Activated CD4-positive, alpha-beta memory T cell treated with anti-CD3 and anti-CD28 coated beads, Interleukin-2, amount 10 ng/mL, durations not matched to agents 7 days and 5 days (primary cell): ENCODE measurements at regions of chr19 and their contacts with region 1.

Region 1: DNA sequence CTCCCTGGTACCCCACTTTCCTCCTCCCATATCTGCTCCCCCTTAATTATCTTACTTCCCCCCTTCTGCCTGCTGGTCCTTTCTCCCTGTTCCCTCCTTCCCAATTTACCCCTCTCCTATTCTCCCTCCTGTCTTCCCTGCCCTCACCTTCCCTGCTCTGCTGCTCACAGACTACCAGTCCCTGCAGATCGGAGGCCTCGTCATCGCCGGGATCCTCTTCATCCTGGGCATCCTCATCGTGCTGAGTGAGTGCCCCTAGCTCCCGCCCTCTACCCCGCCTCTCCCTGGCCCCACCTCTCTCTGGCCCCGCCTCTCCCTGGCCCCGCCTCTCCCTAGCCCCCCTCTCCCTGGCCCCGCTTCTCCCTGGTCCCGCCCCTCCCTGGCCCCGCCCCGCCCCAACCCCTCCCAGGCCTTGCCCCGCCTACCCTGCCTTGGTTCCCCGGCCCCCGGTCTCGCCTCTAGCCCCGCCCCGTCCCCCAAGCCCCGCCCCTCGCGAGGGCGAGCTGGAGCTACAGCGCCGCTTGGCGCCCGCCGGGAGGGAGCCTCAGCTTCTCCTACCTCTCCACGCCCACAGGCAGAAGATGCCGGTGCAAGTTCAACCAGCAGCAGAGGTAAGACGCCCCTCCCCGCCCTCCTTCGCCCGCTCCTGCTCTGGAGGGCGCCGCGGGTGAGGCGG is 2.0 kb upstream of the FXYD7 start:
- DNase-seq: peak; percentile 98
- H3K4me3 Mint-ChIP-seq: peak overlapping the region; percentile 76
- H3K27ac Mint-ChIP-seq: peak overlapping the region; percentile 52
- H3K4me1 Mint-ChIP-seq: peaks cover 35% of the 10 kb centered on the region
- H3K27me3 Mint-ChIP-seq: peaks cover 33% of the 10 kb centered on the region

Region 2: DNA sequence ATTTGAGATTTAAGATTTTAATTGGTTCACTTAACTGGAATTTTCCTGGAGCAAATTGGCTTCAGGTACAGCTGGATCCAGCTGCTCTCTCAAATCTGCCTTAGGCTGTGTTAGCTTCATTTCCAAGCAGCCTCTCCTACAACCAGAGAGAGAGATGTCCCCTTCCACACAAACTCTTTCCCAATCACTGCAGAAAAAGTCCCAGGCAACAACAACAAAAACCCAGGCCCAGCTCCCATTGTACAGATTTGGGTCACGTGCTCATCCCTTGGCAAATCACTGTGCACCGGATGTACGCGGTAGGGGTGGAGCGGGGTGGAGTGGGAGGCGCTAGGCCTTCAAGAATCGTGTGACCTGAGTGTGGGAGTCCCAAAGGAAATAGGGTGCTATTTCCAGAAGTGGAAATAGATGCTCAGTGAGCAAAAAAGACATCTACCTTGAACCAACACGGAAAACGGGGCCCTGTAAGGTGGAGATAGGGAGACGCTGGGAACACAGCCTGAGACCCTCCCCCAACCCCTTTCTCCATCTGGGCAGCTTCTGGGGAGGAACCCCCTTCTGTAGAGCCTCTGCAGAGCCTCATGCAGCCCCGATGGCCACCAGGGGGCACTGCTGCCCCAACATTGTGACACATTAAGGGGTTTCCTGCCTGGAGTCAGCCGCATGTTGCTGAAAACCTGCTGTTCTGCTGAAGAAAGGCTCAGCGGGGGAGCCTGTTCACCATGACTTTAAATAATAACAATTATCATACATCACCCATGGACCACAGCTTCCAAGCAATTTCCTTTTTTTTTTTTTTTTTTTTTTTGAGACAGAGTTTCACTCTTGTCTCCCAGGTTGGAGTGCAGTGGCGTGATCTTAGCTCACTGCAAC is 74.2 kb before region 1 on chr19:
- CTCF ChIA-PET with region 1: interaction called, 25 read pairs
- POLR2A ChIA-PET with region 1: no interaction called
- DNase-seq: peak; percentile 88
- H3K4me3 Mint-ChIP-seq: no peak overlapping the region
- H3K27ac Mint-ChIP-seq: peak overlapping the region; percentile 35
- H3K4me1 Mint-ChIP-seq: peaks cover 16% of the 10 kb centered on the region
- H3K27me3 Mint-ChIP-seq: peaks cover 6% of the 10 kb centered on the region

Region 3: DNA sequence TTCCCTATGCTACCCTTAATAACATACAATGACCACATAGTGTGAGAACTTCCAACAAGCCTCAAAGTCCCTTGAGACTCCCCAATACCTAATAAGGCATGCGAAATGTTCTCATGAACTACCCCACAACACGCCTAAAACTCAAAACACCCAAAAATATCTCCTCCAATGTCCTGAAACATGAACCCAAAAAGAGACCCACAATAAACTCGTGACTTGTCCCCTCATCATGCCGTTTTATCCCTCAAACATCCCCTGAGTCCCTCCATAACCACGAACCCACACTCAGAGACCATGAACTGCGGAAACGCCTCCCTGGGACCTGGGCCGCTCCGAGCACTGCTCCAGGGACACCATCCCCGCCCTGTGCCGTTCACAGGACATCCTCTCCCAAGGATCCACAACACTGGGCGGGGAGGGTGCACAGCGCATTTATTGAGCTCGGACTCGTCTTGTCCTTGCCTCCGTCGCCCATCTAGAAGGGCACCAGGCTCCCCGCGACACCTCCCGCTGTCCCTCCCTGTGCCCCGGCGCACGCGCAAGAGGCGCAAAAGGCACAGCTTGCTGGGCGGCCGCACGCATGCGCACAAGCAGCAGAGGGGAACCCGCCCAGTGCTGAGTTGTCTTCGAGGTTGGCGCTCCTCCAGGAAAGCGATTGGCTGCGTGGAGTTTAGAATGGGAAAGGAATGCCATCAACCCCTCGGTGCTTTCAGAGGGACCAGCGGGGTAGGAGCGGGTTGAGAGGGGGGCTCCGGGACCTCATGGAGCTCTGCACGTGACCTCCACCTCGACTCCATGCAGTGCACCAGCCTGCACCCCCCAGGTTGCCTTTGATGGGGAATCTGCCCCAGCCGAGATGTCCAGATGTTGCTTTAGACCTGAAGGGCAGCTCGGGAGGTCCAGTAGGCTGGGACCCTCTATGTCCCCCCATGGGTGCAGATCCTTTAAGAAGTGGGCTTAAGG is 16.7 kb before region 1 on chr19:
- CTCF ChIA-PET with region 1: interaction called, 20 read pairs
- POLR2A ChIA-PET with region 1: interaction called, 4 read pairs
- DNase-seq: peak; percentile 89
- H3K4me3 Mint-ChIP-seq: peak overlapping the region; percentile 61
- H3K27ac Mint-ChIP-seq: peak overlapping the region; percentile 17
- H3K4me1 Mint-ChIP-seq: peaks cover 19% of the 10 kb centered on the region
- H3K27me3 Mint-ChIP-seq: no peaks in the 10 kb centered on the region

Region 4: GRCh38 chr19:35204799-35205732 is 64.0 kb after region 1 on chr19:
- CTCF ChIA-PET with region 1: interaction called, 5 read pairs
- POLR2A ChIA-PET with region 1: interaction called, 11 read pairs
- DNase-seq: peak; percentile 27
- H3K4me3 Mint-ChIP-seq: no peak overlapping the region
- H3K27ac Mint-ChIP-seq: peak overlapping the region; percentile 97
- H3K4me1 Mint-ChIP-seq: peaks cover 73% of the 10 kb centered on the region
- H3K27me3 Mint-ChIP-seq: no peaks in the 10 kb centered on the region

Region 5: DNA sequence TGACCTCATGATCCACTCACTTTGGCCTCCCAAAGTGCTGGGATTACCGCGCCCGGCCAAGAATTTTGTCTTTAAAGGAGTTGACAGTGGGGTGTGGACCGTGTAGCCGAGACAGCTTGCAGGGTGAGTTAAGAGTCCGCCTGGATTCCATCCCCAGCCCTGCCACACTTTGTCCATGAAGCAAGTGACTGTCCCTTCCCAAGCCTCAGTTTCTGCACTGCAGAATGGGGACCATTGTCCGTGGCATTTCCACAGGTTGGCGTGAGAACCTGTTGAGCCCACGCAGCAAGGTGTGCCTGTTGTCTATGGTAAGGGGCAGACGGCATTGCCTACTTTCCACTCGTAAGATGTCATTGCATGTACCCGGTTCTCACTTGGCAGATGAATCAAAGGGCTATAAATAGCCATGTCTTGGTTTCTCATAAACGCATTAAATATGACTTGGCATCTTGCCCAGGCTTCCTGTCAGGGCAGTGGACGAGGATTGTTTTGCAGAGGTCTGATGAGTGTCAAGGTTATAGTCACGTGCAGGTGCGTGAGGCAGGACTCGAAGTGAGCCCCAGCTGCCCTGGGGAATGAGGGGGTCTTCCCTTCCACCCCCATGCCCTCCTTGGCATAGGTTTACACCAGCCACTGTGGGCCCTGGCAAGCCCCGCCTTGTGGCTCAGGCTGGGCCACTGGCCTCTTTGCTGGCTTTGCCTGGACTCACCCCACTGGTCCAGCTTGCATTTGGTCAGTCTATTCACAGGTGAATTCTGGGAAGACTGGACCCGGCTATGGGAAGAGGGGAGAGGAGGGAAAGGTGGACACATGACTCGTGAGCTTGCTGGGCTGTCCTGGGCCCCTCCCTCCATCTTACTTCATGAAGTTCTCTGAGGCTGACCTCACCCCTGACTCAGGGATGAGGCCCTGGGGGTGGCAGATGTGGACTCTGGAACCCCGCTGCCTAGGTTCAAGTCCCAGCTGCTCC is 72.8 kb after region 1 on chr19:
- CTCF ChIA-PET with region 1: interaction called, 29 read pairs
- POLR2A ChIA-PET with region 1: interaction called, 14 read pairs
- DNase-seq: peak; percentile 78
- H3K4me3 Mint-ChIP-seq: peak overlapping the region; percentile 7
- H3K27ac Mint-ChIP-seq: peak overlapping the region; percentile 99
- H3K4me1 Mint-ChIP-seq: peaks cover 75% of the 10 kb centered on the region
- H3K27me3 Mint-ChIP-seq: no peaks in the 10 kb centered on the region

Region 6: GRCh38 chr19:35269421-35270117 is 128.5 kb after region 1 on chr19:
- CTCF ChIA-PET with region 1: interaction called, 10 read pairs
- POLR2A ChIA-PET with region 1: interaction called, 16 read pairs
- DNase-seq: peak; percentile 78
- H3K4me3 Mint-ChIP-seq: peak overlapping the region; percentile 66
- H3K27ac Mint-ChIP-seq: peak overlapping the region; percentile 64
- H3K4me1 Mint-ChIP-seq: peaks cover 32% of the 10 kb centered on the region
- H3K27me3 Mint-ChIP-seq: no peaks in the 10 kb centered on the region